Activated CD4-positive, alpha-beta memory T cell treated with anti-CD3 and anti-CD28 coated beads, Interleukin-2, amount 10 ng/mL, durations not matched to agents 7 days and 5 days (primary cell): ENCODE measurements at regions of chr17 and their contacts with region 1.

Region 1: DNA sequence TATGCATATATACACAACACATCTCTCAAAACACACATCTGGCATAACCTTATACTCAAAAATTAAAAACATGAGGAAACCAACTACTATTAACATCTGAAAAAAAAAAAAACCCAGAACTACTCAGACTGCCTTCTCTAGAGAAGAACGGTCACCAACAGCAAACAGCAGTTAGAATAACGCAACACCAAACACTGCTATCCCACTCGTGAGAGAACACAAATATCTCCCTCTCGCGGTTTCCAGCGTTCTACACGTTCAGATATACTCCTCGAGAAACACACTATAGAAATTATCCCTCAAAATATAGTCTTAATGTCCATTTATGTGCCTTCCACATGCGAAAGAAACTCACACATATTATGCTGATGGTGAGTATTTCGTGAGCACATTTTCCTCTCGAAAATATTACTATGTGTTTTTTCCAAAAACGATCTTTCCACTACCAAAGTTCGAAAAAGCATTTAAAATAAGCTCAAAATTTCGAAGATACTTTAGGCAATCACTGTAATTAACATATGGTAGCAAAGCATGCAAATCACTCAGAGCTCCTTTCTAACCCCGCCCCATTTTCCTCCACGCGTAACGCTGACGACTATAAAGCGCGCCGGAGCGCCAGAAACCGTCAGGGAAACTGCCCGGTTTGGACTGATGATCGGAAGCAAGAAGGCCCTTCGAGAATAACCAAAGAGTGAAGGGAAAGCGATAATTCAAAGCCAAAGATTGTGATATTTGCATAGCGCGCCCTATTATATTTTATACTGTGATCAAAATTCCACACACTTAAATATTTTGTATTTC is 60.1 kb downstream of the TEX14 start:
- DNase-seq: peak; percentile 97
- H3K4me3 Mint-ChIP-seq: no peak overlapping the region
- H3K27ac Mint-ChIP-seq: no peak overlapping the region
- H3K4me1 Mint-ChIP-seq: peaks cover 3% of the 10 kb centered on the region
- H3K27me3 Mint-ChIP-seq: peaks cover 2% of the 10 kb centered on the region

Region 2: DNA sequence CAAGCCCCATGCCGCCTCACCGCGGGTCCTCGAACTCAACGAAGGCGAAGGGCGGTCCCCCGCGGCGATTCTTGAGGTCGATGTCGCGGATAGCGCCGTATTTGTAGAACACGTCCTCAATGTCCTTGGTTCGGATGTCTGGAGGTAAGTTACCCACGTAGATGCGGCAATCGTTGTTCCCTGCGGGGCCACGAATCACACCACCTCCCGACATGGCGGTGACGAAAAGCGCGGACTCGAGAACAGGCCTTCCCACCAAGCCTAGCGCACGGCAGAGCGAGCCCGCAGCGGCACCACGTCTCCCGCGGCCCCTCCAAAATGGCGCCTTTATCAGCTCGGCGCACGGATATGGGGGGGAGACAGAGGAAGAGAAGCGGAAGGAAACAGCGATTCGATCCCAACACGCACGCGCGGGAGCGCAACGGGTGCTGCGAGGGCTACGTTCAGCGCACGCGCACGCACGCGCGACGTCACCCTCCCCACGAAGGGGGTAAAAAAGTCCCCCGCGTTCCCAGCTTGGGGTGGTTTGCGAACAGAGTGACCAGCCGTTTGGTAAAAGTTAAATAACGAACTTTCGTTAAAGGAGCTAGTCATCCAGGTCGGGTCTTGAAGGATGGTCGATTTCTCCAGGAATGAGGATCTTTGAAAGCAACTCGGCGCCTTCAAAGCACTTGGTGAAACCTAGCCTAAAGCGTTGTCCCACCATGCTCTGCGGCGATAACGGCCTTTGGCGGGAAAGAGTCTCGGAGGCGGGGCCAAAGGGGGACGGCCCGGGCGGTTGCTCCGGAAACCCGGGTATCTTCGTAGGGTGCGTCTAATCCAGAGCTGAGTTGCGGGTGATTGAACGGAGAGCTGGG is 624.6 kb before region 1 on chr17 and contains the start of gene SRSF1:
- CTCF ChIA-PET with region 1: no interaction called
- POLR2A ChIA-PET with region 1: interaction called, 13 read pairs
- DNase-seq: peak; percentile 98
- H3K4me3 Mint-ChIP-seq: peak within 1 kb of the TSS; percentile 99
- H3K27ac Mint-ChIP-seq: peak within 1 kb of the TSS; percentile 99
- H3K4me1 Mint-ChIP-seq: peaks cover 57% of the 10 kb centered on the region
- H3K27me3 Mint-ChIP-seq: no peaks in the 10 kb centered on the region
- total RNA-seq, gene SRSF1: 298 to 304 TPM

Region 3: DNA sequence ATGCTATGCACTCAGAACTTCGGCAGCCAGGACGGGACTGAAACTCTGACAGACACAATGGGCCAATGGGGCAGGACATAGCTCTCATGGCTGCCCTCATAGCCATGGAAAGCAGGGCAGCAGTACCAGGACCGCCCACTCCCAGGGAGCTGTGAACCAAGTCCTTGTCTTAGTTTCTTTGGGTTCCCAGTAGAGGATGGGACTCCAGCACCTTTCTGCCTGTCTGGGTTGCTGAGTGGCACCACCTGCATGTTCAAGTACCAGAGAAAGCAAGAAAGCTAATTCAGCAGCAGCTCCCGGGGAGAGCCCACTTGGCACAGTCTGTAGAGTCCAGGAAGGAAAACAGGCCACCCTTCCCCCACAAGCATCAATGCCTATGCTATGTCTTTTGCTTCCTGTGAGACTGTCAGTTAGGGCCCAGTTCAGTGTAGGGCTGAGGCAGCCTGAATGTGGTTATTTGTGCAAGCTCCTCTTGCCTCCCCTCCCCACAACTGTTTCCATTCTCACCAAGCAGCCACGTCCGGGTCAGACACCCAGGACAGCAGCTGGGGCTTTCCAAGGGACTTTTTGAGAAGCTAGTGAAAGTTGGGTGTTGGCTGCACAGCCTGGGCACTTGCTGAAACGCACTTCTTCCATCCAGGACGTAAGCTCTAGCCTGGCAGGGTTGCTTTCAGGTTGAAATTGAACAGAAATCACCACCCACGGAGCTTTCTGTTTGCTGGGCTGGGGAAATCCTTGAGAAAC is 287.5 kb before region 1 on chr17:
- CTCF ChIA-PET with region 1: no interaction called
- POLR2A ChIA-PET with region 1: interaction called, 17 read pairs
- DNase-seq: peak; percentile 92
- H3K4me3 Mint-ChIP-seq: peak overlapping the region; percentile 98
- H3K27ac Mint-ChIP-seq: peak overlapping the region; percentile 100
- H3K4me1 Mint-ChIP-seq: peaks cover 85% of the 10 kb centered on the region
- H3K27me3 Mint-ChIP-seq: no peaks in the 10 kb centered on the region

Region 4: DNA sequence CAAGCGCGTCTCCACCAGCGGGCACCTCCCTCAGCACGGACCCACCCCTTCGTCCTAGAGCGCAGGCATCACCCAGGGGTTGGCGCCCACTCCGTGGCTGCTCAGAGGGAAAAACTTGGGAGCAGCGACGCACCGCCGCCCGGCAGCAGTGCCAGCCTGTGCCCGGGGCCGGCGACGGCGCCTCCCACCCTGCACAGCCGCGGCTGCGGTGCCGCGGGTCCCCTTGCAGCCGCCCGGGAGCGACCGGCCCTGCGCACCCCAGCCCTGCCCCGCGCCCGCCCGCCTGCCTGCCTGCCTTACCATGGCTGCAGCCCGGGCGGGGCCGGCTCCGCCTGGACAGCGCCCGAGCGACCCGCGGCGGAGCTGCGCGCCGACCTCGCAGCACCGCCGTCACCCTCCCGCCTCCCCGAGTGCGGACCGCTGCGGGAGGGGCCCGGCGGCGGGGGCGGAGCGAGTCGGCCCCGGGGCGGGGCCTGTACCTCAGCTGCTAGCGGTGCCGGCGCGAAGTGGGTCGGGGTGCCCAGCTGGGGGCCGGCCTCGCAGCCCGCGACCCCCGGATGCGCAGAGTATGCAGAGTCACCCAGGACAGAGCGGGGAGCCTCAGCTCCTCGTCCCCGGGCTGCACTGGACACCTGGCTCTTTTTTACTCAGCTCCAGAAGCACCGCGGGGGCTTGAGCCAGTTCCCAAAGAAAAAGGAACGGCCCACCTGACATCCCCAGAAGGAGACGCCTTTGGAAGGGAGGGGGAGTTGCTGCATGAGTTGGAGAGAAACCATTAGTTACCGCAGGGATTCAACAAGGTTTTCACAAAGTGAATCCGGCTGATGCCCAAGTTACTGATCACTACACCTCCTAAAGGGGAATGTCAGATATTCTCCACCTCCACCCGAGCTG is 99.8 kb before region 1 on chr17:
- CTCF ChIA-PET with region 1: no interaction called
- POLR2A ChIA-PET with region 1: interaction called, 59 read pairs
- DNase-seq: peak; percentile 72
- H3K4me3 Mint-ChIP-seq: peak overlapping the region; percentile 37
- H3K27ac Mint-ChIP-seq: no peak overlapping the region
- H3K4me1 Mint-ChIP-seq: peaks cover 10% of the 10 kb centered on the region
- H3K27me3 Mint-ChIP-seq: peaks cover 50% of the 10 kb centered on the region

Region 5: GRCh38 chr17:58615768-58616659 is 15.7 kb before region 1 on chr17:
- CTCF ChIA-PET with region 1: interaction called, 6 read pairs
- POLR2A ChIA-PET with region 1: interaction called, 213 read pairs
- DNase-seq: no peak
- H3K4me3 Mint-ChIP-seq: no peak overlapping the region
- H3K27ac Mint-ChIP-seq: peak overlapping the region; percentile 62
- H3K4me1 Mint-ChIP-seq: peaks cover 50% of the 10 kb centered on the region
- H3K27me3 Mint-ChIP-seq: peaks cover 1% of the 10 kb centered on the region

Region 6: GRCh38 chr17:58728786-58729185 is 97.1 kb after region 1 on chr17:
- CTCF ChIA-PET with region 1: no interaction called
- POLR2A ChIA-PET with region 1: interaction called, 15 read pairs
- DNase-seq: no peak
- H3K4me3 Mint-ChIP-seq: no peak overlapping the region
- H3K27ac Mint-ChIP-seq: no peak overlapping the region
- H3K4me1 Mint-ChIP-seq: no peaks in the 10 kb centered on the region
- H3K27me3 Mint-ChIP-seq: no peaks in the 10 kb centered on the region